Calu3 (cell line): ENCODE measurements at regions of chr12 and their contacts with region 1.

Region 1: DNA sequence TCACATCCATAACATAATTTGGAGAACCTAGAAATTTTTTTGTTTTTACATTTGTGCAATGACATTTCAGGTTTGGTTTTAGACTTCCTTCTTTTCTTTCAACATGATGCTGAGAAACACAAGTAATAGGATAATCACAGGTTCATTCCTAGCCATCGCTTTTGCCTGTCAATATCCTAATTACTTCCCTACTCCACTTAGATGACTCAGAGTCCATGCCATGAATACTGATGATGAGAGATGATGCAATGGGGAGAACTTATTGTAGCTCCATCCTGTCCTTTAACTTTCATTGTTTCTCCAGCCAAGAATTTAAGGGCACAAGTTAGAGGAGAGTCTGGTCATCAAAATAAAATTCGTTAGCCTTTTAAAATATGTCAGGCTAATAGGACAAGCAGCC is 101.3 kb downstream of the PTPRO start:
- DNase-seq: no peak
- H3K4me3 Mint-ChIP-seq: no peak overlapping the region
- H3K27ac Mint-ChIP-seq: peak overlapping the region; percentile 38
- H3K4me1 Mint-ChIP-seq: no peaks in the 10 kb centered on the region
- H3K27me3 Mint-ChIP-seq: peaks cover under 1% of the 10 kb centered on the region
- CTCF ChIP-seq: no peak

Region 2: DNA sequence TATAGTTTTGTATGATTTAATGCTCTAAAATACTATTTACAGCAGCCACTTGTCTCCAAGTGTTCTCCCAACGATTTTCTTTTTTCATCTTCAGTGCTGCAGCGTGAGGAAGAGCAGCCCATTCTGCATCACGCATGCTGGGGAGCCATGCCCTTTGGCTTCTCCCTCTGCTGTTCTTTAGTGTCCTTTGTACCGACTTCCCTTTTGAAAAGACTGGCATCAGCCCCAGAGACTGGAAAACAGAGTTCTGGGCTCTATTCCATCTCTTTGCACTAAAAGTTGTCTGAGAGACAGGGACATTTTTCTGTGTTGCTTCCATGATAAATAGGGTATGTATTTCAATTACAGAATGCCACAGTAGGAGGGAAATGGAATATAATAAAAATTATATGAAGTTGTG is 307.5 kb before region 1 on chr12:
- CTCF ChIA-PET with region 1: no interaction called
- intact Hi-C with region 1: no loop called
- DNase-seq: no peak
- H3K4me3 Mint-ChIP-seq: no peak overlapping the region
- H3K27ac Mint-ChIP-seq: no peak overlapping the region
- H3K4me1 Mint-ChIP-seq: no peaks in the 10 kb centered on the region
- H3K27me3 Mint-ChIP-seq: no peaks in the 10 kb centered on the region
- CTCF ChIP-seq: no peak

Region 3: DNA sequence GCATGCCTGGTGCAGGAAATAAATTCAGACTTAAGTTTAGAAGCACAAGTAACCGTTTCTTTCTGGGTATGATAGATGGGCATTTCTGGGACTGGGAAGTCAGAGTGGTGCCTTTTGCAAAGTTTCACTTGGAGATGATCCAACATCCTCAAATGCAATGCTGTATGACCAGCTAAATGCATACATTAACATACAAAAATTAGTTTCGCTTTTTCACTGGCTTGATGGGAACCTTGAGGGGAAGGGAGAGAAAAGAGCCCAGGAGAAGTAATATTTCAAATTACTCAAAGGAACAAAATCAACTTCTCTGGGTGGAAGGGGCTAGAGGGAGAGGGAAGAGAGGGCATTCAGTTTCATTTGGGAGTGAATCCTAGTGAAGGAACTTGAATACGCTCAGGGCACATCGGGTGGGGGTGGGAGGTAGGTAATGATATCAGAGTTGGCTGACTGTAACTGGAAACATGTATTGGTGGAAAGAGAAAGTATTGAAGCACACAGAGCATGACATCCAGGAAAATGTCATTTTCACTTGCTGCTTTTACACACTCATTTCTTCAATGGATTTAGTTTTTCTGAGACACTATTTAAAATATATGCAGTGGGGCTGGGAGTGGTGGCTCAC is 74.2 kb after region 1 on chr12:
- CTCF ChIA-PET with region 1: interaction called, 10 read pairs
- intact Hi-C with region 1: no loop called
- DNase-seq: no peak
- H3K4me3 Mint-ChIP-seq: no peak overlapping the region
- H3K27ac Mint-ChIP-seq: no peak overlapping the region
- H3K4me1 Mint-ChIP-seq: no peaks in the 10 kb centered on the region
- H3K27me3 Mint-ChIP-seq: peaks cover 17% of the 10 kb centered on the region
- CTCF ChIP-seq: no peak